ENCODE measurements at regions of chr7 and their contacts with region 1.

Region 1: GRCh38 chr7:100691676-100692577 is 2.1 kb downstream of the GIGYF1 start:
- DNase-seq: peak in 9 of 10 donors; percentile 61 to 85 (median 79)
- H3K4me3 ChIP-seq: peak overlapping the region in 58 of 59 donors; percentile 0 to 96 (median 84)
- H3K27ac ChIP-seq: peak overlapping the region in 53 of 59 donors; percentile 4 to 95 (median 80)
- H3K27me3 ChIP-seq: no peaks in the 10 kb centered on the region
- CTCF ChIP-seq: peak; percentile 36 to 96 (median 88)

Region 2: DNA sequence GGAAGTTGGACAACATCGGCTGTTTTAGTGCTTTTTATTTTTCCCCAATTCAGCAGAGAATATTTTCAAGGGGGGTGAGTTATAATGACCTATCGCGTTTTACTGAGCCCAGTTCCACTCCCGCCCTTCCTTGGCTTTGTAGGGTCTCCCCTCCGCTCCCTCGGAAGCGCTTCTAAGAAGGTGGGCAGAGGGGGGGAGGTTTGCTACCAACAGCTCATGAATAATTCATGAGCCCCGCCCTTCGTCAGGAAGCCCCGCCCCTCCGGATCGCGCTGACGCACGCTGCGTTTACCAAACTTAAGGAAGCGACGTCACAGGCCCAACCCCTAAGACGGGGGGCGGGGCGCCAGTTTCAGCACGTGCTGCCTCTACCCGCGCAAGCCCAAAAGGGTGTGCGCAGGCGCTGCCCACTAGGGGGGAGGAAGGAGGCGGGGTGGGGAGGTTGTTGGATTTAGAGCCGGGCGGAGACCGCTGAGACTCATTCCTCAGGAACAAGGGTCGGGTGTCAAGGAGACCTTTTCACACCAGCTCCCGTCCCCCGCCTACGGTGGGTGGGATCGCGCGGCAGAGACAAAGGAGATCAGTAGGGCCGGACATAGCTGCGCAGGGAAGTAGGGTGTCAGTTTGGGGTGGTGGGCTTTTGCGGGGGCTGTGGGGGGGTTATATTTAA is 262.8 kb before region 1 on chr7:
- intact Hi-C with region 1: loop called in 1 of 2 experiments (anchors 5 kb)
- DNase-seq: peak; percentile 99 to 100 (median 100)
- H3K4me3 ChIP-seq: peak overlapping the region; percentile 67 to 99 (median 88)
- H3K27ac ChIP-seq: peak overlapping the region; percentile 98 to 100 (median 100)
- H3K27me3 ChIP-seq: no peaks in the 10 kb centered on the region
- CTCF ChIP-seq: peak in 7 of 56 donors; percentile 4 to 21 (median 9)

Region 3: GRCh38 chr7:100568896-100569844 is 122.8 kb before region 1 on chr7:
- intact Hi-C with region 1: loop called in 1 of 2 experiments (anchors 5 kb)
- DNase-seq: peak in 8 of 10 donors; percentile 29 to 74 (median 60)
- H3K4me3 ChIP-seq: peak overlapping the region in 55 of 59 donors; percentile 19 to 58 (median 42)
- H3K27ac ChIP-seq: peak overlapping the region in 47 of 59 donors; percentile 4 to 80 (median 59)
- H3K27me3 ChIP-seq: peaks cover 0 to 3% (median 0%) of the 10 kb centered on the region in 45 donors
- CTCF ChIP-seq: peak in 37 of 56 donors; percentile 8 to 46 (median 28)

Region 4: DNA sequence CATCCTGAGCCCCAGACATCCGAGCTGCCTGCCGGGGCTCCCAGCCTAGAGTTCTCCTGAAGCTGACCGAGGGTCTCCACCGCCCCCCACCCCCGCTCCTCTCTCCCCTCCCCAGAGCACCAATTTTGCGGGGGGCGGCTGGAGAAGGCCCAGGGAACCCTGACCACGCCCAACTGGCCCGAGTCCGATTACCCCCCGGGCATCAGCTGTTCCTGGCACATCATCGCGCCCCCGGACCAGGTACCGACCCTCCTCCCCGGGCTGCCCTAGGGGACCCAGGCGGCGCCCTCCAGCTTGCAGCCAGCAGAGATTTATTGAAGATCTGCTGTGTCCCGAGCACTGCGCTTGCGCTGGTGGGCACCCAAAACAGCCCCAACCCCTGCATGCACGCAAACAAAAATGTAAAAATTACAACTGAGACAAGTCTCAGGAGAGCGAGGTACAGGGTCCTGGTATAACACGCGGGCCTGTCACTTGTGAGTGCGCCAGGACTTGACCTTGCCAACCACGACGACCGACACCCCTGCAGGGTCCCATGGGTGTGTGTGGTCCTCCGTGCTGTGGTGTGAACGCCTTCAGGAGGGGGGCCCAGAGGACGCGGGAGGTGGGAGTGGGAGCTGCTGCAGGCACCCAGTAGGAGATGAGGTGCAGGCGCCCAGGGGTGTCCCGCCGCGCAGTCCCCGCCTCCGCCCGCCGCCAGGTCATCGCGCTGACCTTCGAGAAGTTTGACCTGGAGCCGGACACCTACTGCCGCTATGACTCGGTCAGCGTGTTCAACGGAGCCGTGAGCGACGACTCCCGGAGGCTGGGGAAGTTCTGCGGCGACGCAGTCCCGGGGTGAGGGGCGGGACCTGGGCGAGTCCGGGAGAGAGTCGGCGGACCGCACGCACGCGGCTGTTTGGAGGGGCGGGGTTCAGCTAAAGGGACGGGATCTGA is 86.7 kb before region 1 on chr7:
- intact Hi-C with region 1: loop called (anchors 5 kb)
- DNase-seq: peak in 1 of 10 donors; percentile 31
- H3K4me3 ChIP-seq: peak overlapping the region; percentile 38 to 82 (median 69)
- H3K27ac ChIP-seq: peak overlapping the region in 23 of 59 donors; percentile 4 to 77 (median 54)
- H3K27me3 ChIP-seq: no peaks in the 10 kb centered on the region
- CTCF ChIP-seq: peak in 6 of 56 donors; percentile 1 to 7 (median 3)

Region 5: GRCh38 chr7:100678291-100678984 is 13.5 kb before region 1 on chr7:
- intact Hi-C with region 1: loop called in 1 of 2 experiments (anchors 2 kb)
- DNase-seq: no peak
- H3K4me3 ChIP-seq: no peak overlapping the region
- H3K27ac ChIP-seq: peak overlapping the region in 34 of 59 donors; percentile 0 to 96 (median 37)
- H3K27me3 ChIP-seq: no peaks in the 10 kb centered on the region
- CTCF ChIP-seq: no peak

Region 6: DNA sequence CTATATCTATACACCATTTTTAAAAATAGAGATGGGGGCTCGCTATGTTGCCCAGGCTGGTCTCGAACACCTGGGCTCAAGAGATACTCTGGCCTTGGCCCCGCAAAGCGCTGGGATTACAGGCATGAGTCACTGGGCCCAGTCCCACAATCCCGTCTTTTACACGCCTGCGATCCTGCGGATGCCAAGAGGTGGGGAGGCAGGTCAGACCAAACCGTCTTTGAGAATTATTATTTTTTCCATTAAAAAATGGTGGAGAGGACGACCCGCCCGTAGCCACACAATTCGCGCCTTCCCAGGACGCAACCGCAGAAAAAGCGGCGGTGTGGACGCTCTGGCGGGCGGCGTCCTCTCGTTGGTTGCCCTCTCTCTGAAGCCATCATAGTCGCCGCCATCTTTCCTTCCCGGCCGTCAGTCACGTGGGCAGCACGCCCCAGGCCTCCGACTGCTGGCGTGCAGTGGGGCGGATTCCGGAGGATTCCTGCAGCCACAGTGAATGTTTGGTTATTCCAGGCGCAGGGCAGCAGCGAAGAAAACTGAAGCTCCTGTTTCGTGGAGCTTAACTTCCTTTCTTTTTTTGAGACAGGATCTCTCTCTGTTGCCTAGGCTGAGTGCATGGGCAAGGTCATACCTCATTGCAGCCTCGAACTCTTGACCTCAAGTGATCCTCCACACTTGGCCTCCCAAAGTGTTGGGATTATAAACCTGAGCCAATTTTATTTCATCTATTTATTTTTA is 145.3 kb after region 1 on chr7:
- intact Hi-C with region 1: no loop called
- DNase-seq: peak; percentile 88 to 95 (median 92)
- H3K4me3 ChIP-seq: peak overlapping the region; percentile 24 to 77 (median 62)
- H3K27ac ChIP-seq: peak overlapping the region; percentile 18 to 96 (median 86)
- H3K27me3 ChIP-seq: no peaks in the 10 kb centered on the region
- CTCF ChIP-seq: peak in 50 of 56 donors; percentile 4 to 68 (median 39)